ENCODE measurements at regions of chr3 and their contacts with region 1.

Region 1: GRCh38 chr3:66822186-66823008 is 175.7 kb upstream of the KBTBD8 start:
- DNase-seq: peak; percentile 68
- ATAC-seq: peak; percentile 68

Region 2: GRCh38 chr3:66253790-66254620 is 568.4 kb before region 1 on chr3:
- intact Hi-C with region 1: loop called (anchors 10 kb)
- DNase-seq: no peak
- ATAC-seq: no peak